ENCODE measurements at regions of chr7 and their contacts with region 1.

Region 1: GRCh38 chr7:108525985-108526767 is at the start of gene PNPLA8:
- DNase-seq: peak; percentile 99 to 100
- H3K4me3 ChIP-seq: peak within 1 kb of the TSS; percentile 68 to 88
- H3K27ac ChIP-seq: peak within 1 kb of the TSS; percentile 98 to 99
- H3K4me1 ChIP-seq: peaks cover 0 to 15% of the 10 kb centered on the region in 2 donors
- H3K27me3 ChIP-seq: no peaks in the 10 kb centered on the region
- CTCF ChIP-seq: peak in 1 of 3 experiments; percentile 11
- total RNA-seq, gene PNPLA8: 4.4 TPM

Region 2: GRCh38 chr7:107213193-107213788 is 1312.9 kb before region 1 on chr7:
- intact Hi-C with region 1: no loop called
- DNase-seq: no peak
- H3K4me3 ChIP-seq: no peak overlapping the region
- H3K27ac ChIP-seq: no peak overlapping the region
- H3K4me1 ChIP-seq: peaks cover 0 to 6% of the 10 kb centered on the region in 2 donors
- H3K27me3 ChIP-seq: no peaks in the 10 kb centered on the region
- CTCF ChIP-seq: no peak

Region 3: GRCh38 chr7:107387128-107387527 is 1139.0 kb before region 1 on chr7:
- intact Hi-C with region 1: loop called (anchors 5 kb)
- DNase-seq: peak; percentile 12 to 76
- H3K4me3 ChIP-seq: peak overlapping the region in 1 of 2 donors; percentile 42
- H3K27ac ChIP-seq: peak overlapping the region; percentile 66 to 82
- H3K4me1 ChIP-seq: peaks cover 11 to 17% of the 10 kb centered on the region in 2 donors
- H3K27me3 ChIP-seq: no peaks in the 10 kb centered on the region
- CTCF ChIP-seq: no peak

Region 4: DNA sequence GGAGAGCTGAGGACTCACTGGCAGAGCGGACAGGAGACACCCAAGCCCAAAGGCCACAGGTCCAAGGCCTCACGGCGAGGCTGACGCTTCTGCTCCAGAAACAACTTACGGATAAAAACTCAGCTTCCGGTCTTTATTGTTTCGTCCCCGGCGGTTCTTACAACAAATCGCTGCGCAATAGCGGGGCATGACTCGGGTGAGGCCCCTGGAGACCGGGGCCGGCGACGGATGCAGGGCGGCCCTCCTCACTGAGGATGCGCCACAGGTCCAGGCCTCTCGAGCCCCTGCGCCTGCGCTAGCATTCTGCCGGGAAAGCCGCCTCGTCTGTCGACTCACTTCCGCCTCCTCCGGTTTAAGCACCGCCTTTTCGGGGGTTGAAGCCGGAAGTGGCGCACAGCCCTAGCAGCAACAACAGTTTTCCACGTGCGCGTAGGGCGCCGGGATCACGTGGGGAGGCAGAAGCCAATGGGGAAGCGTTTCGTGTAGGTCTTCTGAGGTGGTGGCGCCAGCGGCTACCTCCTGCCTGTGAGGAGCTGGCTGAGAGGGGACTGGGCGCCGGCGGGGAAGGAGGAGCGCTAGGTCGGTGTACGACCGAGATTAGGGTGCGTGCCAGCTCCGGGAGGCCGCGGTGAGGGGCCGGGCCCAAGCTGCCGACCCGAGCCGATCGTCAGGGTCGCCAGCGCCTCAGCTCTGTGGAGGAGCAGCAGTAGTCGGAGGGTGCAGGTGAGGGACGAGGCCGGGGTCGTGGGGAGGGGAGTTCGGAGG is 43.4 kb after region 1 on chr7 and contains the starts of genes DNAJB9 and THAP5:
- intact Hi-C with region 1: loop called (anchors 1 kb)
- DNase-seq: peak; percentile 99 to 100
- H3K4me3 ChIP-seq: peak within 1 kb of the TSS; percentile 77 to 87
- H3K27ac ChIP-seq: peak within 1 kb of the TSS; percentile 98
- H3K4me1 ChIP-seq: peaks cover 4 to 11% of the 10 kb centered on the region in 2 donors
- H3K27me3 ChIP-seq: no peaks in the 10 kb centered on the region
- CTCF ChIP-seq: no peak
- total RNA-seq, gene DNAJB9: 7.5 TPM
- total RNA-seq, gene THAP5: 18.1 TPM

Measured in ascending aorta (tissue), 2 donors.